Mammary epithelial cell (primary cell): ENCODE measurements at regions of chr1 and their contacts with region 1.

Region 1: DNA sequence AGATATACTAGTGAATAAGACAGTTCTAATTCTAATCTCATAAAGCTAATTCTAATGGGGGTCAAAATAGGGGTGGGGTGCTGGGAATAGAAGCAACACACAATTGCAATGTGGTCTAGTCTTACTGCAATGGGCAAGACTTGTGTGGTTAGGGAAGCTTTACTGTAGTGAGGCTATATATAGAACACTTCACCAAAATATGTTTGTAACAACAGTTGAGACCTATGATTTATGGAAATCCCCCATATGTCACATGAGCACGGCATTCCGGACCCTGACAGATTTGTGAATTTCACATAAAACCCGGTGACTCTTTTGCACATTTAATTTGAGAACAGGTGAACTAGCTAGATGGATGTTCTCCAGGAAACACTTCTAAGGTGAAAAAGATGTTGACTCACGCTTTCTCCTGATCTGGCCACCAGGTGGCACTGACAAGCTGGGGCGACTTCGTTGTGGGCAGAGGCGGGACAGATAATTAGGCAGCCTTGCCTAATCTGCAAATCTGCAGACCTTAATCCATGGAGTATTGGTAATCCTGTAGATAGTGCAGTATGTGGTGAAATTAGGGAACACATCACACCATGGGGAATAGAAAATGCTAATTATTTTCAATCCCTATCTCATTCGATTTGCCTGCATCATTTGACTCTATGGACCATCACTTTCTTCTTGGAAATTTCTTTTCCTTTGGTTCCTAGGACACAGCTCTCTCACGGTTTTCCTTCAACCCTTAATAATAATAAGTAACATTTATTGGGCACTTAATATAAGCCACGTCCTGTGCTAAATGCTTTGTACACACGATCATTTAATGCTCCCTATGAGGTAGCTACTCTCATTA is 37.7 kb downstream of the KIAA0040 start:
- DNase-seq: peak; percentile 51
- H3K4me3 ChIP-seq: no peak overlapping the region
- H3K27ac ChIP-seq: no peak overlapping the region
- H3K4me1 ChIP-seq: peaks cover 19% of the 10 kb centered on the region
- H3K27me3 ChIP-seq: no peaks in the 10 kb centered on the region
- CTCF ChIP-seq: peak; percentile 88 to 93

Region 2: DNA sequence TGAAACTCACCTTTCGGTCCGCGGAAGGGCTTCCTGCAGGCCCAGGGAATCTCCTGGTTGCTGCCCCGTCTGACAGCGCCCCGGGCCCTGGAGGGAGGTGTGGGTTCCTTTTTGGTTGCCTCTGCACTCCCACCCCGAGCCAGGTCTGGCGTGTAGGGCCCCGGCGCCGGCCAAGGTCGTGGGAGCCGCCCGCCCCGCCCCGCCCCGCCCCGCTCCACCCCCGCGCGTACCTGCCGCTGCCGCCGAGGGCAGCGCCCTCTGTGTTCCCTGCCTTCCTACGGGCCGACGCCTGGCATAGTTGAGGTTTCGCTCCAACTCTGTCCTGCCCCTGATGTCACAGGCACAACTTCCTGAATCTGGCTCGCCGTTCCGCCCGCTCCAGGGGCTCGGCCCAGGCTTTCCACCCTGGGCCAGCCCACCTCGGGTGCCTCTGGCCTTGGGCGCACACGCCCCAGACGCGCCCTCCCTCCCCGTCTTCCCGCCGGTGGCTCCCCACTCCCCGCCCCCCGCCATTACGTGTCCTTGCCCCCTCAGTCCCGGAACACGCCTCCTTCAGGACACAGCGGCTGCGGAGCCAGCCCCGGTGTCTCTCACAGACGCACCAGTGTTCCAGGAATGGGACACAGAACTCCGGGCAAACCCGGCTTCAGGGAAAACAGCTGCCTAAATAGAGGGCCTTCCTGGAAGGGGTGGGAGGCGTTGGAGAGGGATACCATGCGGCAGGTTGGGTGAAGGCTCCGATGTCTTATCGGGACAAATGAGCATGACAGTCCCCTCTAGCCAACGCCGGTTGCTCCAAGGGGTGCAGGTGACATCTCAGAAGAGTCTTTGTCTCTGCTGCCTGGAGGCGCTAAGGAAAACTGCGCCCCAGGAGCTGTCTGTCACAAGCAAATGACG is 38.0 kb after region 1 on chr1 and contains the start of gene KIAA0040:
- CTCF ChIA-PET with region 1: interaction called, 6 read pairs
- dilution Hi-C with region 1: no loop called
- in situ Hi-C with region 1: no loop called
- intact Hi-C with region 1: loop called (anchors 2 kb)
- DNase-seq: peak; percentile 84
- H3K4me3 ChIP-seq: peak within 1 kb of the TSS; percentile 71 to 92 (median 90)
- H3K27ac ChIP-seq: peak within 1 kb of the TSS; percentile 98
- H3K4me1 ChIP-seq: peaks cover 75% of the 10 kb centered on the region
- H3K27me3 ChIP-seq: no peaks in the 10 kb centered on the region
- CTCF ChIP-seq: peak in 1 of 2 donors; percentile 27
- total RNA-seq, gene KIAA0040: 34.3 to 75.0 TPM

Region 3: GRCh38 chr1:175319418-175320230 is 164.8 kb after region 1 on chr1:
- CTCF ChIA-PET with region 1: interaction called, 7 read pairs
- dilution Hi-C with region 1: loop called (anchors 5 kb)
- in situ Hi-C with region 1: loop called (anchors 5 kb)
- intact Hi-C with region 1: loop called (anchors 1 kb)
- DNase-seq: peak; percentile 51
- H3K4me3 ChIP-seq: no peak overlapping the region
- H3K27ac ChIP-seq: no peak overlapping the region
- H3K4me1 ChIP-seq: peaks cover 7% of the 10 kb centered on the region
- H3K27me3 ChIP-seq: no peaks in the 10 kb centered on the region
- CTCF ChIP-seq: peak; percentile 83 to 96

Region 4: DNA sequence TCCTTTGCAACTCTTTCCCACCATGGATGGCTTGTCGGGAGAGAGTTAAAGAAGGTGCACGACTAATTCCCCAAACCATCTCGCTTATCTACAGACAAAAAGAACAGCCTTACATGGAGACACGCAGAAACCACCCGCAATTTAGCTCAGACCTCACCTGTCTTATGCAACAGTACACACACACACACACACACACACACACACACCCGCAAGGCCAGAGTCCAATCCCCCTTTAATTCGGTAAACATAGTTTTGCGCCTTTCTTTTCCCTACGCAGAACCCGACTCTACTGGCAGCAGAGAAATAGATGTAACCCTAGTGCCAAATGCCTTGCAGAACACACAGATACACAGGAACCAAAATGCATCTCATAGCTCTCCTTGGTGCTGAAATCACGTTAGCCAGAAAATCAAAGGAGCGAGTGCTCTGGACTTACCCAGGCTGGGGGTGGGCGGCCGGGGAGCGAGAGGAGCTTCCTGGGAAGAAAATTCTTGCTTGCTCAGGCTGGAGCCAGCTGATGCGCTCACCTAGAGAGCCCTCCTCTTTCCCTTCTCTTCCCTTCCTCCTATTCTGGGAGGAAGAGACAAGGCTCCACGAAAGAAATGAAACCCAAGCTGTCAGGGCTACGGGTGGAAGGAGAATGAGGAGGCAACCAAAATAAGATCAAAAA is 588.1 kb after region 1 on chr1:
- CTCF ChIA-PET with region 1: no interaction called
- dilution Hi-C with region 1: no loop called
- in situ Hi-C with region 1: no loop called
- intact Hi-C with region 1: loop called (anchors 5 kb)
- DNase-seq: peak; percentile 45
- H3K4me3 ChIP-seq: no peak overlapping the region
- H3K27ac ChIP-seq: no peak overlapping the region
- H3K4me1 ChIP-seq: no peaks in the 10 kb centered on the region
- H3K27me3 ChIP-seq: no peaks in the 10 kb centered on the region
- CTCF ChIP-seq: no peak

Region 5: GRCh38 chr1:176073524-176074157 is 918.8 kb after region 1 on chr1:
- CTCF ChIA-PET with region 1: no interaction called
- dilution Hi-C with region 1: no loop called
- in situ Hi-C with region 1: no loop called
- intact Hi-C with region 1: loop called (anchors 5 kb)
- DNase-seq: peak; percentile 48
- H3K4me3 ChIP-seq: no peak overlapping the region
- H3K27ac ChIP-seq: no peak overlapping the region
- H3K4me1 ChIP-seq: no peaks in the 10 kb centered on the region
- H3K27me3 ChIP-seq: no peaks in the 10 kb centered on the region
- CTCF ChIP-seq: peak; percentile 68 to 73

Region 6: GRCh38 chr1:176880954-176881595 is 1726.2 kb after region 1 on chr1:
- CTCF ChIA-PET with region 1: no interaction called
- dilution Hi-C with region 1: no loop called
- in situ Hi-C with region 1: no loop called
- intact Hi-C with region 1: loop called (anchors 5 kb)
- DNase-seq: peak; percentile 50
- H3K4me3 ChIP-seq: no peak overlapping the region
- H3K27ac ChIP-seq: no peak overlapping the region
- H3K4me1 ChIP-seq: peaks cover 11% of the 10 kb centered on the region
- H3K27me3 ChIP-seq: no peaks in the 10 kb centered on the region
- CTCF ChIP-seq: peak; percentile 73 to 90